ENCODE measurements at regions of chr18 and their contacts with region 1.

Region 1: DNA sequence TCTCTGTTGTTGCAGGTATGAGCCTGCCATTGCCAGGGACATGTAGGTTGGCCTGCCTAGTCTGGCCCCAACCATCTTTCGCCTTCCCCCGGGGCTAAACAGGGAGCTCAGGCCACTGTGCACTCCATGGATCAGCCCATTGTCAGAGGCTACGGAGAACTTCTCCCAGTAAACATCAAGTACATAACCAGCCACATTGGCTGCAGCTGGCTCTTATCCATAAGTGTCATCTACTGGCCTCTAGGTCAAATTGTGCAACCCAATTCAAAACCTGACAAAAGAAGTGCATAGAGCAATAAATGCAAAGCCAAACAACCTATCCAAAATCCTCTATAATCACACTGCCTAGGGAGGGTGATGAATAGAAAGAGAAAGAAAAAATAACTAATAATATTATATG is 418.1 kb upstream of the DCC start:
- DNase-seq: no peak
- H3K4me3 ChIP-seq: no peak overlapping the region
- H3K27ac ChIP-seq: no peak overlapping the region
- H3K4me1 ChIP-seq: no peaks in the 10 kb centered on the region
- H3K27me3 ChIP-seq: no peaks in the 10 kb centered on the region
- CTCF ChIP-seq: no peak

Region 2: DNA sequence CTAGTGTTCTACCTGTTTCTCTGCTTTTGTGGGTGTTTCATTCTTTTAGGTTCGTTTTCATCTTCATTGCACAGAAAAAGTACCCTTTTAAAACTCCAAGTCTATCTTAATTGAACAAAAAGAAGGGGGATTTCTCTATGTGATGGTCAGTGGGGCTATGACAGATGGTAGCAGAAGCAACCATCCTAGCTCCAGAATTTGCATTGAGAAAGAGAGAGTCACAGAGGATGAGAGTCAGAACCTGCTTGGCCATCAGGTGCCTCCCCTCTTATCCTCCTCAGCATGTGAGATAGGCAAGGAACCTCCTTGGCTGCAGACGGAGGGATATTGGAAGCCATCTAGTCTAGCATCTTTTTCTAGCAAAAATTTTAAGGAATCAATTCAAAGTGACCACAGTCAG is 20.1 kb after region 1 on chr18:
- CTCF ChIA-PET with region 1: no interaction called
- POLR2A ChIA-PET with region 1: no interaction called
- intact Hi-C with region 1: loop called (anchors 2 kb)
- DNase-seq: no peak
- H3K4me3 ChIP-seq: no peak overlapping the region
- H3K27ac ChIP-seq: no peak overlapping the region
- H3K4me1 ChIP-seq: no peaks in the 10 kb centered on the region
- H3K27me3 ChIP-seq: no peaks in the 10 kb centered on the region
- CTCF ChIP-seq: no peak